ENCODE measurements at regions of chr11 and their contacts with region 1.

Region 1: DNA sequence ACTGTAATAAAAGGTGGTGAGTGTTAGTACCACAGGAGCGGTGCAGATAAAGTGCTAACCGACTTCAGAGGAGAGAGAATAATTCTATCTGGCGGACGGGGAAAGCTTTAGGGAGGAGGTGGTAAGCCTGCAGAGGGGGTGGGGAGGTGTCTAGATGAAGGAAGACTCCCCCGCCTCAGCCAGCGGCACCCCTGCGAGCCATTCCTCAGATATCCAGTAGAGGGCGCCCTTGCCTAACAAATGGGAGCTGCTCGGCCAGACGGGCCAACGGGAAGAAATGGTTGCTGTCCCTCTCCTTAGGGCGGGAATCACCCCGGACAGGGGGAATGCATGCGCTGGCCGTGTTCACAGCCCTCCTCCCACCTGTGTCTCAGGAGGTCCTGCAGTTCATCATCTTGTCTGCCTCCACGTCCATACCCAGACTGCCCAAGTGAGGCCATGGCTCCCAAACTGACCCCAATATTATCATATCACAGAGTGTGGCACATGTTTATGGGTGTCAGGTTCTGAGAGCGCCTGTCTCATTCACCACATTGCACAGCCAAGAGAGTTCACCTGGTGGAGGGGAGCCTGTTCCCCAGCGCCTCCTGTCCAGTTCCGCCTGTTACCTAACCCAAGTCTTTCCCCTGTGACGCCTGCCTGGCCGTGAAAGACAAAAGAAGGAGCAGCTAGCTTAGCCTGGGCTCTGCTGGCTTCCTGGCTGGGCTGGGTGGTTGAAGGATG is 85.5 kb downstream of the ST3GAL4 start:
- ATAC-seq: peak; percentile 78 to 95 (median 82)
- H3K4me3 ChIP-seq: no peak overlapping the region
- H3K27ac ChIP-seq: no peak overlapping the region
- H3K4me1 ChIP-seq: peaks cover 15 to 21% of the 10 kb centered on the region in 2 donors

Region 2: DNA sequence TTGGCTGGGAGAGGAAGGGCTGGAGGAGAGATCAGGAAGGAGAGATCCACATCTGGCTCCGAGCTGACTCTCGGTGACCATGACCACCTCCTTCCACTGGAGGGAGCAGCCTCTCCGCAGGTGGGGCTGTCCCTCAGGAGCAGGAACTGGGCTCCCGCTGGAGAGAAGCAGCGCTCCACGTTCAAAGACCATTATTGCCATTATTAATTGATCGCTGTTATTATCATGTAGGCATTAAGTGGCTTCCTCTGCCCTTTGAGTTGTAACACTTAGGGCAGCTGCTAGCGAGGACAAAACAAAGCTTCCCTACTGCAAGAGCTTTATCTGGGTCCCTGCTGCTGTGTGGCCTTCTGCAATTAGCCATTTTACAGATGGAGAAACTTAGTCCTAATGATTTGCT is 166.4 kb after region 1 on chr11:
- in situ Hi-C with region 1: loop called in 1 of 9 experiments (anchors 10 kb)
- ATAC-seq: peak; percentile 92 to 99 (median 94)
- H3K4me3 ChIP-seq: no peak overlapping the region
- H3K27ac ChIP-seq: no peak overlapping the region
- H3K4me1 ChIP-seq: peaks cover 29 to 31% of the 10 kb centered on the region in 2 donors

Region 3: DNA sequence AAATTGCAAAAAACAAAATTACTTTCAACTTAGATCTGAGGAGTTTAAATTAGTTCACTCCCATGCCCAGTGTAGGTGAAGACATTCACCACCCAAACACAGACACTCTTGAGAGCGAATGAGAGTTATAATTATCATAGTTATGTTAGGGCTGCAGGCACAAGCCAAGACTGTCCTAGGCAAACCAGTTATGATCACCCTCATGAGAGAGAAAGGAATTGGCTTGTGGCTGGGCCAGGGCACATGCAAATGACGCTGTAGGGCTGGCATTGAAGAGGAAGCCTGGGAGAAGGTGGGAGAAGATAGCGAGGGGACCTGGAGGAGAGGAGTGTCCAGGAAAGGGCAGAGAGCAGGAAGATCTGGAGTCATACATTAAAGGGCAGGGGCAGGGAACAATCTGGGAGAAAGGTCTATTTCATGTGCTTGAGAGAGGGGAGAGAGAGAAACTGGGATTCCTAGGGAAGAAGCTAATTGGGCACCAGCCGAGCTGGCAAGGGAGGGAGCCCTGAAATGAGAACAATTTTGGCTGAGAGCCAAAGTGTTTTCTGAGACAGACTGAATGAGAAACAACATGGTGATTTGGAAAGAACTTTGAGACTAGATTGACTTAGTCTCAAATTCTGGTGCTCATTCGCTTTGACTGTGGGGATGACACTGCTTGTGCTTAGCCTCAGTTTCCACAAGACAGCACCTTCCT is 279.7 kb after region 1 on chr11:
- in situ Hi-C with region 1: no loop called
- ATAC-seq: no peak
- H3K4me3 ChIP-seq: no peak overlapping the region
- H3K27ac ChIP-seq: no peak overlapping the region
- H3K4me1 ChIP-seq: peaks cover 3 to 5% of the 10 kb centered on the region in 2 donors

Measured in motor neuron (in vitro differentiated cells).